A549 (cell line): ENCODE measurements at regions of chr7 and their contacts with region 1.

Region 1: GRCh38 chr7:98841179-98841997 is 28.4 kb downstream of the TMEM130 start:
- DNase-seq: peak; percentile 59 to 76
- ATAC-seq: peak; percentile 68 to 82
- H3K4me3 ChIP-seq: no peak overlapping the region
- H3K27ac ChIP-seq: peak overlapping the region in 1 of 2 experiments; percentile 54; a peak in 3 of 6 replicates
- H3K4me1 ChIP-seq: peaks cover 13% of the 10 kb centered on the region; the same call in 2 of the 3 replicates
- CTCF ChIP-seq: peak; percentile 96
- EP300 ChIP-seq: no peak
- POLR2A ChIP-seq: no peak
- RAD21 ChIP-seq: peak; percentile 99

Region 2: GRCh38 chr7:98294796-98295382 is 546.5 kb before region 1 on chr7:
- CTCF ChIA-PET with region 1: interaction called, 12 read pairs
- POLR2A ChIA-PET with region 1: no interaction called
- DNase-seq: peak; percentile 75 to 85
- ATAC-seq: peak; percentile 82 to 90
- H3K4me3 ChIP-seq: no peak overlapping the region
- H3K27ac ChIP-seq: peak overlapping the region; percentile 40 to 81
- H3K4me1 ChIP-seq: peaks cover 13% of the 10 kb centered on the region
- CTCF ChIP-seq: peak; percentile 90
- EP300 ChIP-seq: no peak
- POLR2A ChIP-seq: no peak
- RAD21 ChIP-seq: peak; percentile 93 to 96

Region 3: GRCh38 chr7:98434095-98434494 is 407.3 kb before region 1 on chr7:
- CTCF ChIA-PET with region 1: interaction called, 288 read pairs
- POLR2A ChIA-PET with region 1: no interaction called
- DNase-seq: no peak
- ATAC-seq: no peak; a peak in 2 of 6 replicates
- H3K4me3 ChIP-seq: no peak overlapping the region
- H3K27ac ChIP-seq: no peak overlapping the region
- H3K4me1 ChIP-seq: no peaks in the 10 kb centered on the region
- CTCF ChIP-seq: no peak
- EP300 ChIP-seq: no peak
- POLR2A ChIP-seq: no peak
- RAD21 ChIP-seq: no peak

Region 4: DNA sequence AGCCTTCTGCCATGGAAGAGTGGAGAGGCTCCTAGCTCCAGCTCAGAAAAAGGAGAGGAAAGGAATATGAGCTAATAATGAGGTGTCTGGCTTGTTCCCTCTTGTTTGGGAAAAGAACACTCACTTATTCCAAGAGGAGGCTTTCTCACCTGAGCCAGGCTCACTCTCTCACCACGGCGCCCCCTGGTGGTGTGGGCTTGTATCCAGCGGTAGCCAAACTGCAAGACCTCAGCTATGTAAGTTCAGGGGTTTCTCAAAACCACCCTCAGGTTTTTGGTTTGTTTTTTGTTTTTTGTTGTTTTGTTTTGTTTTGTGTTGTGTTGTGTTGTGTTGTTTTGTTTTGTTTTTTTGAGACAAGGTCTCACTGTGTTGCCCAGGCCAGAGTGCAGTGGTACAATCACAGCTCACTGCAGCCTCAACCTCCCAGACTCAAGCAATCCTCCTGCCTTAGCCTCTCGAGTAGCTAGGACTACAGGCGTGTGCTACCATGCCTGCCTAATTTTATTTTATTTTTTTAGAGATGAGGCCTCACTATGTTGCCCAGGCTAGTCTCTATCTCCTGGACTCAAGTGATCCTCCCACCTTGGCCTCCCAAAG is 95.6 kb before region 1 on chr7:
- CTCF ChIA-PET with region 1: interaction called, 17 read pairs
- POLR2A ChIA-PET with region 1: no interaction called
- DNase-seq: peak; percentile 68 to 71
- ATAC-seq: peak; percentile 74 to 92; a peak in 5 of 6 replicates
- H3K4me3 ChIP-seq: no peak overlapping the region
- H3K27ac ChIP-seq: no peak overlapping the region
- H3K4me1 ChIP-seq: no peaks in the 10 kb centered on the region
- CTCF ChIP-seq: peak; percentile 82
- EP300 ChIP-seq: no peak
- POLR2A ChIP-seq: no peak
- RAD21 ChIP-seq: peak; percentile 68 to 72

Region 5: DNA sequence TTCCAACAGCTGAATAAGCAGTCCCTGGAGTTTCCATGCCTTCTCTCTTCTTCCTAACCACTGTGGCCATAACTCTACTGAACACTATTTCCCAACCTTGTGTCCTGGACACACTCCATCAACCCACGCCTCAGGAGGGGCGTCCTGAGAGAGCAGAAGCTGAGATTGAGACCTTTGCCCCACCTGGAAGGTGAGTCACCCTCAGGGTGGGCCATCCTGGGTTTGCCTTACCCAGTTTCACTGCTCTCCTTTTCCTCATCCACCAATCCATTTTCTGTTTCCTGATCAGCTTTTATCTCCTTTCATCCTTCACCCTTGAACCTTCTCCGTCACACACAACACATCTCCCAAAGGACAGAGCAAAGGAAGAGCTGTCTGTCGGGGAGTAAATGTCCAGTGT is 63.0 kb before region 1 on chr7:
- CTCF ChIA-PET with region 1: interaction called, 11 read pairs
- POLR2A ChIA-PET with region 1: no interaction called
- DNase-seq: no peak
- ATAC-seq: no peak
- H3K4me3 ChIP-seq: no peak overlapping the region
- H3K27ac ChIP-seq: no peak overlapping the region
- H3K4me1 ChIP-seq: peaks cover 4% of the 10 kb centered on the region; the same call in 1 of the 3 replicates
- CTCF ChIP-seq: no peak
- EP300 ChIP-seq: no peak
- POLR2A ChIP-seq: no peak
- RAD21 ChIP-seq: no peak

Region 6: GRCh38 chr7:98855610-98856422 is 14.4 kb after region 1 on chr7:
- CTCF ChIA-PET with region 1: interaction called, 68 read pairs
- POLR2A ChIA-PET with region 1: no interaction called
- DNase-seq: no peak
- ATAC-seq: peak; percentile 17 to 33; a peak in 2 of 6 replicates
- H3K4me3 ChIP-seq: no peak overlapping the region
- H3K27ac ChIP-seq: no peak overlapping the region
- H3K4me1 ChIP-seq: peaks cover 10% of the 10 kb centered on the region; the same call in 2 of the 3 replicates
- CTCF ChIP-seq: no peak
- EP300 ChIP-seq: no peak
- POLR2A ChIP-seq: no peak
- RAD21 ChIP-seq: no peak